ENCODE measurements at regions of chr5 and their contacts with region 1.

Region 1: DNA sequence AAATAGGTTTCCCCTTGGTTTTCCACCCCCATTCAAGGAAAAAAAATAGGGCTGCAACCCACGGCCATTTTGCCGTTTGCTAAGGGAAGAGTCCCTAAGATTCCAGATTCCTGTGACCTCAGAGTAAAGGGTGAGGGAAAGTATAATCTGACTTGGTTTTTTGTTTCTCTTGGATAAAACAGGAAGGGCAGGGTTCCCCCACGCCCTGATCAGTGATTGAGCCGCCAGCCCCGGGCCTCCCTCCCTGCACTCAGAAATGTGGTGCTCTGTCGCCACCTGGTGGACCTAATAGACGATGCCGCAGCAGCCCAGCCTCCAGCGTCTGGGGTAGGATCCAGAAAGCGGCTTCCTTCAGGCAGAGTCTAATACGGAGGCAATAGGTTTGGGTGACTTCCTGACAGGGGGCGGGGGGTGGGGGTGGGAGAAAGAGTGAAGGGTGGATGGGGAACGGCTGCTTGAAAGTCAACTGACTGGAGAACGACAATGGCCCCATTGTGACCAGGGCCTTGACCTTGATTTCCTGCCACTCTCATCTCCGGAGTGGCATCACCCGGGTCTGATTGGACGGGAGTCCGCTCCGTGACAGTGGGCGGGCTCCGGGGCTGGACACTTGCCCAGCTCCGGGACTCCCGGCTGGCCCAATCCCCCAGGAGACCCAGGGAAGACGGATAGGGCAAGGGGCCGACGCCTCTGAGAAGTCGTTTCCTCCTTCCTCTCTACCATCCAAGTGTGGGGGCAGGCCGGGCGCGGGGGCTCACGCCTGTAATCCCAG is 17.8 kb upstream of the CYSTM1 start:
- DNase-seq: peak; percentile 88 to 98
- H3K4me3 ChIP-seq: no peak overlapping the region
- CTCF ChIP-seq: peak in 1 of 3 donors; percentile 96
- POLR2A ChIP-seq: no peak

Region 2: DNA sequence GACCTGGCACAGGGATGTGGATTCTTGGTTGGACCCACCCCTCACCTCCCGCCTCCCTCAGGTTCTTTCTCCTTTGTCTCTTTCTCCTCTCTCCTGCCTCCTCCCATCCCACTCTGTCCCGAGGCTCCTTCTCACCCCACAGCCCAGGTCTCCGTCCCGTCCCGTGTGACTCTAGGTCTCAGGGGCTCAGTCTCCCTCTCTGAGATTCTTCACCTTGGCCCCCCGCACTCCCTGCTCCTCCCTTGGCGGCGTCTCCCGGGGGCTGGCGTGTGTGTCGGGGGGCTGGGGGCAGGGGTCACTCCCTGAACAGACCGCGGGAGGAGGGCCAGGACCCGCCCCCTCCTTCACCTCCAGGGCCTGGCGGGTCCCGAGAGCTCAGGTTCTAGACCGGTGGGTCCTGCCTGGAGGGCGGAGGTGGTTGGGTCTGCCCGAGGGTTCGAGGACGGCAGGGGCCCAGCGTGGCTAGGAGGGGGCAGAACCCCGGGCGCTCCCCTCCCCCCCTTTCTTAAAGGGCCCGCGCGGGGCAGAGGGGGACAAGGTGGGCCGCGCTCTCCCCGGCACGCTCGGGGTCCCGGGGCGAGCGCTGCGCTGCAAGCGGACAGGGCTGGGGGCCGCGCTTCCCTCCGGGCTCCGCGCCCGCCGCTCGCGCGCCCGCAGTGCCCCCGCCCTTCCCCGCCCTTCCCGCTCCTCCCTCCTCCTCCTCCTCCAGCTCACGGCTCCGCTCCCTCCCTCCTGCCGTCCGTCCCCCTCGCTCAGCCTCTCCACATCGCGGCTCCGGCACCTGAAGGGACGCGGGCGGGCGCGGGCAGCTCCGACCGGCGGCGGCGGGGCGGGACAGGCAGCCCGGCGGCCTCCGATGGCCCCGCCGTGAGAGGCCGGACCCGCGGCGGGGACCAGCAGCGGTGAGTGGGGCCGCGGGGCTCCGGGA is 361.9 kb before region 1 on chr5 and contains the start of gene PSD2:
- intact Hi-C with region 1: loop called (anchors 10 kb)
- DNase-seq: no peak
- H3K4me3 ChIP-seq: peak within 1 kb of the TSS; percentile 14
- CTCF ChIP-seq: no peak
- POLR2A ChIP-seq: no peak
- total RNA-seq, gene PSD2: 0.15 to 0.30 (median 0.16) TPM

Region 3: DNA sequence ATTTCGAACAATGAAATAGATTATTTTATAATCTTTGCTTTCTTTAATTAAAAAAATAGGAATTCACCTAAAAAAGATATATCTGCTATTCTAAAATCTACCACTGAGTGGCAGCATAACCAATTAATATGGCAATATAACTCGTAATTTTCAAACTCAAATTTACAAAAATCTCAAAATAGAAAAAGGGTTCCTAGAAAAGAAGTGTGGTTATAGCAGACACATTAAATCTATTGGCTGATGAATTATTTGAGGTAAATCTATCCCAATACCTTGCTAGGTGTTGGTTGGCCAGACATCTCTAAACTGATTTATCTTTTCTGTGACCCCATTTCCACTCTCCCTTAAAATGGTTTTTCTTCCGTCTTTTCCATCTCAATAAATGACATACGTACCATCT is 83.9 kb before region 1 on chr5:
- intact Hi-C with region 1: loop called (anchors 2 kb)
- DNase-seq: no peak
- H3K4me3 ChIP-seq: no peak overlapping the region
- CTCF ChIP-seq: no peak
- POLR2A ChIP-seq: no peak

Measured in lower leg skin (tissue), 4 donors.